Body of pancreas (tissue), 4 donors: ENCODE measurements at regions of chr5 and their contacts with region 1.

Region 1: GRCh38 chr5:10283927-10284635 is 23.6 kb downstream of the CMBL start:
- DNase-seq: peak; percentile 86 to 90 (median 88)
- ATAC-seq: peak; percentile 84
- H3K4me3 ChIP-seq: no peak overlapping the region
- H3K27ac ChIP-seq: no peak overlapping the region
- H3K4me1 ChIP-seq: peaks cover 20% of the 10 kb centered on the region
- H3K27me3 ChIP-seq: no peaks in the 10 kb centered on the region
- CTCF ChIP-seq: peak; percentile 84 to 96 (median 89)
- POLR2A ChIP-seq: no peak

Region 2: GRCh38 chr5:10353241-10354047 is 69.4 kb after region 1 on chr5 and contains the start of gene MARCHF6:
- intact Hi-C with region 1: no loop called
- DNase-seq: peak; percentile 98 to 99 (median 98)
- ATAC-seq: peak; percentile 93
- H3K4me3 ChIP-seq: peak within 1 kb of the TSS; percentile 69 to 78
- H3K27ac ChIP-seq: peak within 1 kb of the TSS; percentile 95 to 100 (median 98)
- H3K4me1 ChIP-seq: peaks cover 45% of the 10 kb centered on the region
- H3K27me3 ChIP-seq: no peaks in the 10 kb centered on the region
- CTCF ChIP-seq: peak in 2 of 7 experiments; percentile 7 to 14
- POLR2A ChIP-seq: peak; percentile 95 to 98 (median 97)
- total RNA-seq, gene MARCHF6: 76.5 to 116 TPM

Region 3: DNA sequence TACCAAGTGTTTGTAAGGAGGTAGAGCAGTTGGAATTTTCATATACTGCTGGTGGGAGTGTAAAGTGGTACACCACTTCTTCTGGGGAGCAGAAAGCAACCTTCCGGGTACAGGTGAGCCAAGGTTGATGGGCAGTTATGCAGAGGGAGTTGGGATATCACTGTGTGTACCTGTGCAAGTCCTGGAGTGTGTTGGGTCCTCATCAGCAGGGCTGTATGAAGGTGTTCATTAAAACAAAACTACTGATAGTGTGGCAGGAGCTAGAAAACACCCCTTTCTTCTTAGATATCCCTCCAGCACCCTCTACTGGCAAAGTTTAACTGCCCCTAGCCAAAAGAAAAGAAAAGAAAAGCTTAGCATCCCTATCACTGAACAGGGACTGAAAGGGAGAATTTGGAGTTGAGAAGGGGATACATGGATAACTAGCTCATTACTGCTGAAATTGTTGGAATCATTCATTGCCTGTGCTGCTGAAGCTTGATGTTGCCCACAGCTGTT is 80.2 kb after region 1 on chr5:
- intact Hi-C with region 1: loop called (anchors 10 kb)
- DNase-seq: no peak
- ATAC-seq: peak; percentile 20
- H3K4me3 ChIP-seq: no peak overlapping the region
- H3K27ac ChIP-seq: no peak overlapping the region
- H3K4me1 ChIP-seq: peaks cover 49% of the 10 kb centered on the region
- H3K27me3 ChIP-seq: no peaks in the 10 kb centered on the region
- CTCF ChIP-seq: peak; percentile 10 to 56 (median 32)
- POLR2A ChIP-seq: no peak

Region 4: GRCh38 chr5:10424124-10424731 is 140.1 kb after region 1 on chr5:
- intact Hi-C with region 1: loop called (anchors 10 kb)
- DNase-seq: peak in 2 of 4 donors; percentile 36 to 37
- ATAC-seq: no peak
- H3K4me3 ChIP-seq: no peak overlapping the region
- H3K27ac ChIP-seq: no peak overlapping the region
- H3K4me1 ChIP-seq: no peaks in the 10 kb centered on the region
- H3K27me3 ChIP-seq: no peaks in the 10 kb centered on the region
- CTCF ChIP-seq: peak in 6 of 7 experiments; percentile 9 to 43 (median 36)
- POLR2A ChIP-seq: no peak

Region 5: GRCh38 chr5:10627160-10627701 is 343.1 kb after region 1 on chr5:
- intact Hi-C with region 1: loop called (anchors 10 kb)
- DNase-seq: no peak
- ATAC-seq: peak; percentile 19
- H3K4me3 ChIP-seq: no peak overlapping the region
- H3K27ac ChIP-seq: peak overlapping the region in 3 of 4 donors; percentile 31 to 72 (median 62)
- H3K4me1 ChIP-seq: peaks cover 12% of the 10 kb centered on the region
- H3K27me3 ChIP-seq: no peaks in the 10 kb centered on the region
- CTCF ChIP-seq: no peak
- POLR2A ChIP-seq: no peak